ENCODE measurements at regions of chr7 and their contacts with region 1.

Region 1: DNA sequence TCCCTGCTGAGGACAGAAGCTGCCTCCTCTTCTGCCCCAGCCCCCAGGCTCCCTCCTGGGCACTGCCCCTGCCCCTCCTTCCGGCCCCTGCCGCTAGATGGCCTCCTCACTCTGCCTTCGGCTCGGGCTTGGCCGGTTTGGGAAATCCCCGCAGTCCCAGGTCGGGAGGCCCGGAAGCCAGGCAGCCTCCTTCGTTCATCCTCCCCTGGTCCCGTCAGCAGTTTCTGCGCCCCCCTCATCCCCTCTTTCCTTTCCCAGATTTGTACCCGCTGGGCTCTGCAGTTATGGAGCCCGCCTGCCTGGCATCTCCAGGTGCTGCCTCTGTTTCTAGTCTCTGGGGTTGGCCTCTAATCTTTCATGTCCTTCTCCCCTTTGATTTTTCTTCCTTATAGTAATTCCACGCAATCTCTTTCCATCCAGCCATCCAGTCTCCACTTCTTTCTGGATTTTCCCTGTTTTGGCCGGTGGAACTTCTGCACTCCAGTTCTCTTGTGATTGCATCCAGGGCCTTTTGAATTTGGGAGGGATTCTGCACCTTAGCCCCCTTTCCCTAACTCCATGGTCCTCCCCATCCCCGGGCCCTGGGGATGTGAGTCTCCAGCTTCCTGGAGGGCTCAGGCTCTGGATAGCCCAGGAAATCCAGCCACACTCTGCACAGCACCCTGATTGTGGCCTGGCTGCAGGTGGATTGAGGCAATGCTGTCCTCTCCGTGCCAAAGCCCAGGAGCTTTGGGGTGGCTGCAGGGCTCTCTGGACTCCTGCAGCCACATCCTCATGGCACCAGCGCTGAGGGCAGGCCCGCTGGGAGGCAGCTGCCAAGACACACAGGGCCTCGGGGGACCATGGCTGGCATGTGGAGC is 3.3 kb upstream of the SHH start:
- DNase-seq: peak; percentile 93
- H3K4me3 Mint-ChIP-seq: peak overlapping the region; percentile 34
- H3K27ac Mint-ChIP-seq: no peak overlapping the region
- H3K4me1 Mint-ChIP-seq: peaks cover 15% of the 10 kb centered on the region
- H3K27me3 Mint-ChIP-seq: peaks cover 42% of the 10 kb centered on the region

Region 2: GRCh38 chr7:155380221-155380861 is 435.2 kb before region 1 on chr7:
- intact Hi-C with region 1: no loop called
- DNase-seq: peak; percentile 88
- H3K4me3 Mint-ChIP-seq: no peak overlapping the region
- H3K27ac Mint-ChIP-seq: no peak overlapping the region
- H3K4me1 Mint-ChIP-seq: peaks cover 18% of the 10 kb centered on the region
- H3K27me3 Mint-ChIP-seq: peaks cover 75% of the 10 kb centered on the region

Region 3: DNA sequence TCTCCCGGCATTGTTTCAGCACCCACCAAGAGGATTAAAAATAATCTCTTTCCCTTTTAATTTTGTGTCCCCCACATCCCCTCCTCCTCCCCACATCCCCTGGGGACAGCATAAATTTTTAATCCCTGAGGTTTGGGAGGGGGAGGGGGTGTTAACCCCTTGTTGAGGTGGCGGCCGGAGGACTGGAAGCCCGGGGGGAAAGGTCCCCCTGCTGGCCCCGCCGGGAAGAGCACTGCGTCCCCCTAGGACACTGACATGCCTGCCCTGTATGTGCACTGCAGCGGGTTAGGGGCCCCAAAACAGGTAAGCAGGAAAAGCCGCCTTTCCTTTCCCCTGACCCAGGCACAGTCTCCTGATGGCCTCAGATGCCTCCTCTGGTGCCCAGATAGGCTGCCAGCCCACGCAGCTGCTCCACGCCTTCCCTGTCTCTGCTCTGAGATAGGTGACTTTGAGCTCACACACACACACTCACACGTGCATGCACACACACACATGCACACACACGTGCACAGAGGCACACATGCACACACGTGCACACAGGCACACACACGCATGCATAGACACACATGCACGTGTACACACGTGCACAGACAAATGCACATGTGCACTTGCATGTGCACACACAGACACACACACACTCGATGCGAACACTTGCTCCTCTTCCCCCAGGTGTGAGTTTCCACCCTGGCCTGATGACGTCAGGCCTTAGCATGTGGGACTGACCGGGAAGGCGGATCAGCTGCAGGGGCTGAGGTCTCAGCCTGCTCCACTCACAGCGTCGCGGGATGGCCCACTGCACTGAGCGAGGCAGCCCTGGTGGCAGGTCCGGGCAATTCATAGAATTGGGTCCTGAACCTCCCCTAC is 281.5 kb before region 1 on chr7:
- intact Hi-C with region 1: loop called (anchors 5 kb)
- DNase-seq: peak; percentile 72
- H3K4me3 Mint-ChIP-seq: no peak overlapping the region
- H3K27ac Mint-ChIP-seq: no peak overlapping the region
- H3K4me1 Mint-ChIP-seq: peaks cover 7% of the 10 kb centered on the region
- H3K27me3 Mint-ChIP-seq: peaks cover 69% of the 10 kb centered on the region

Region 4: DNA sequence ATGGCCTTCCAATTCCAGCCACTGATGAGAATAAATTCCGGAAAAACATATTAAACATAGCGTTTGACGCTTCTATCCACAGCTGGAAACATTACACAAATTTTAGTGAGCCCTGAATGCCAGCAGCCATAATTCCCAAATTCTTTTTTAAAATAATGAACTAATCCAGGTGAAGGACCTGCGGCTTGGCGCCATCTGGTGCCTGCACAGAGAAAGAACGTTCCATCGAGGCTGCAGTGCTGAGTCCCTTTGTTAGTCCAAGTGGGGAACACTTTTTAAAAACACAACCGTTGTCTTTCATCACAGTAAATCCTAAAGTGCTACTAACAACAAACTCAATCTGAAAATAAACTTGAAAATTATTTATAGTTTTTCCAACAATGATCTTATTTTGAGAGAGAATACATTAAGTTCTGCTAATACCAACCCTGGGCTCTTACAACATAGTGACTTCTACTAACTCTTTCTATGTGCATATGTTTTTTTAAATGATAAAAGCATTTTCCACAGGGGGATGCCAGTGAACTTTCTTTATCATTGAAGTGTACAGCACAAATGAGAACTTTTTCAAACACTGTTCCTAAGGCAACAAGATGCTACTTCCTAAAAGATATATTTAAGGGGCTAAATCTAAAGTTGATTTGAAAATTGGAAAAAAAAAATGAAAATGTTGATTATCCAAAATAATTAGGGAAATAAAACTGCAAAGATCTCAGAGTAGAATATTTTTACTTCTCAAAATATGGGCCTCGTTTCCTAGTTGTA is 658.1 kb after region 1 on chr7:
- intact Hi-C with region 1: loop called (anchors 1 kb)
- DNase-seq: peak; percentile 78
- H3K4me3 Mint-ChIP-seq: no peak overlapping the region
- H3K27ac Mint-ChIP-seq: no peak overlapping the region
- H3K4me1 Mint-ChIP-seq: no peaks in the 10 kb centered on the region
- H3K27me3 Mint-ChIP-seq: peaks cover 15% of the 10 kb centered on the region

Region 5: DNA sequence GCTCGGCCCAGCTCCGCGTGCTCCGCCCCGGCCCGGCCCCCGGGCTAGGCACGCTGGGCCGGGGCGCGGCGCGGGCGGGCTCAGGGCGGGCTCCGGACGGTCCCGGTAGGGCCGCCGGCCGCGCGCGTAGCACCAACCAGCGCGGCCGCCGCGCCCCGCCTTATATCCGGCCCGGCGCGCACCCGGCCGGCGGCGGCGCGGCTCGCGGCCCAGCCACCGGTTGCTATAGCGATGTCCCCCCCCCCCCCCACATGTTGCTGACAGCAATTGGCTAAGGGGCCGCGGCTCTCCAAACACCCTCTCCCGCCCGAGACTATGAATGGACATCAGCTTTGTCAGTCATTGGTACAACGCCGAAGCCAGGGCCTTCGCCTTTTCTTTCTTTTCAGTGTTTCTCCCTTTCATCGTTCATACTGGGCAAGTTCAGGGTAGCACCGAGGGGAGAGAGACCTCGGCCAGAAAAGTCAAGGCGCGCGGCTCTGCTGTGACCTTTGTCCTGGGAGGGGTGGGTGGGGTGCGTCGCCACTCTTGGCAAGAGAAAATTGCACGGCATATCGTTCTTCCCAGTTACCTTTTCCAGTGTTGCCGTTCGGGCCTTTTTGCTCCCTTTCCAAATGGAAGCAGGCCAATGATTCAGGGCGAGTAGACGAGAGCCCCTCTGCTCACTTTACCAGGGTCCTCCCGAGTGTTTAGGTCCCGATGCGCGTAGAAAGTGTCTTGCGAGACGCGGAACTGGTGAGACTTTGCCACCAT is 1875.4 kb after region 1 on chr7:
- intact Hi-C with region 1: loop called (anchors 5 kb)
- DNase-seq: no peak
- H3K4me3 Mint-ChIP-seq: peak overlapping the region; percentile 45
- H3K27ac Mint-ChIP-seq: peak overlapping the region; percentile 29
- H3K4me1 Mint-ChIP-seq: peaks cover 2% of the 10 kb centered on the region
- H3K27me3 Mint-ChIP-seq: peaks cover 55% of the 10 kb centered on the region

Measured in activated CD4-positive, alpha-beta T cell treated with anti-CD3 and anti-CD28 coated beads, Interleukin-2, amount 10 ng/mL, durations not matched to agents 24 days and 14 days (primary cell).